ENCODE measurements at regions of chr3 and their contacts with region 1.

Region 1: GRCh38 chr3:171874251-171874679 is 31.1 kb downstream of the TMEM212 start:
- DNase-seq: no peak
- H3K4me3 ChIP-seq: no peak overlapping the region
- H3K27ac ChIP-seq: peak overlapping the region; percentile 71
- H3K4me1 ChIP-seq: peaks cover 27% of the 10 kb centered on the region
- H3K27me3 ChIP-seq: no peaks in the 10 kb centered on the region
- CTCF ChIP-seq: no peak
- POLR2A ChIP-seq: no peak

Region 2: GRCh38 chr3:171365489-171365888 is 508.8 kb before region 1 on chr3:
- intact Hi-C with region 1: no loop called
- DNase-seq: no peak
- H3K4me3 ChIP-seq: no peak overlapping the region
- H3K27ac ChIP-seq: no peak overlapping the region
- H3K4me1 ChIP-seq: no peaks in the 10 kb centered on the region
- H3K27me3 ChIP-seq: no peaks in the 10 kb centered on the region
- CTCF ChIP-seq: no peak
- POLR2A ChIP-seq: no peak

Region 3: GRCh38 chr3:171809821-171810628 is 64.2 kb before region 1 on chr3 and contains the start of gene PLD1:
- intact Hi-C with region 1: loop called (anchors 10 kb)
- DNase-seq: no peak
- H3K4me3 ChIP-seq: peak within 1 kb of the TSS; percentile 67 to 88
- H3K27ac ChIP-seq: peak within 1 kb of the TSS; percentile 91
- H3K4me1 ChIP-seq: peaks cover 41% of the 10 kb centered on the region
- H3K27me3 ChIP-seq: no peaks in the 10 kb centered on the region
- CTCF ChIP-seq: no peak
- POLR2A ChIP-seq: no peak
- total RNA-seq, gene PLD1: 35.6 TPM